Dorsolateral prefrontal cortex (tissue), 120 donors: ENCODE measurements at regions of chr15 and their contacts with region 1.

Region 1: DNA sequence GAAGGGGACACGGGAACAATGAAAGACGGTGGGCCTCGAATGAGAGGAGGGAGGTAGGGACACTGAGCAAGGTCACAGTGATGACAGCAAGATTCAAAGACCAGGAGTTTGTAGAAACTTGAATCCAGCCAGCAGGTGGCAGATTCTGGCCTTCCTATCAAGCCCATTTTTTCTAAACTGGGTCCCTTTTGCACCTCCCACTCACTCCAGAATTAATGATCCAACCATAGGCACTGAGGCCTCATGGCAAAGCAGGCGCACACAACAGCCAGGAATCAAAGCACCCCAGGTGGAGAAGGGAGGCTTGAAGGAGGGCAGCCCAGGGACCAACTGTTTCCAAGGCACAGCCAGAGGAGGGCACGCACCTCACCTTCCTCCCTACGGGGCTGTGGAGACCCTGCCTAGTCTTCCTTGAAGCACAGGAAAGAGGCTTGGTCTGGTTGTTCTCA is 90.2 kb downstream of the ANP32A start:
- DNase-seq: peak in 9 of 10 donors; percentile 28 to 77 (median 58)
- H3K4me3 ChIP-seq: no peak overlapping the region
- H3K27ac ChIP-seq: peak overlapping the region in 53 of 59 donors; percentile 12 to 89 (median 65)
- H3K27me3 ChIP-seq: no peaks in the 10 kb centered on the region
- CTCF ChIP-seq: peak; percentile 64 to 89 (median 78)

Region 2: GRCh38 chr15:68383161-68384074 is 347.1 kb before region 1 on chr15:
- intact Hi-C with region 1: loop called in 1 of 2 experiments (anchors 10 kb)
- DNase-seq: peak in 1 of 10 donors; percentile 5
- H3K4me3 ChIP-seq: no peak overlapping the region
- H3K27ac ChIP-seq: no peak overlapping the region
- H3K27me3 ChIP-seq: peaks cover 0 to 10% (median 0%) of the 10 kb centered on the region in 45 donors
- CTCF ChIP-seq: peak; percentile 42 to 80 (median 63)

Region 3: DNA sequence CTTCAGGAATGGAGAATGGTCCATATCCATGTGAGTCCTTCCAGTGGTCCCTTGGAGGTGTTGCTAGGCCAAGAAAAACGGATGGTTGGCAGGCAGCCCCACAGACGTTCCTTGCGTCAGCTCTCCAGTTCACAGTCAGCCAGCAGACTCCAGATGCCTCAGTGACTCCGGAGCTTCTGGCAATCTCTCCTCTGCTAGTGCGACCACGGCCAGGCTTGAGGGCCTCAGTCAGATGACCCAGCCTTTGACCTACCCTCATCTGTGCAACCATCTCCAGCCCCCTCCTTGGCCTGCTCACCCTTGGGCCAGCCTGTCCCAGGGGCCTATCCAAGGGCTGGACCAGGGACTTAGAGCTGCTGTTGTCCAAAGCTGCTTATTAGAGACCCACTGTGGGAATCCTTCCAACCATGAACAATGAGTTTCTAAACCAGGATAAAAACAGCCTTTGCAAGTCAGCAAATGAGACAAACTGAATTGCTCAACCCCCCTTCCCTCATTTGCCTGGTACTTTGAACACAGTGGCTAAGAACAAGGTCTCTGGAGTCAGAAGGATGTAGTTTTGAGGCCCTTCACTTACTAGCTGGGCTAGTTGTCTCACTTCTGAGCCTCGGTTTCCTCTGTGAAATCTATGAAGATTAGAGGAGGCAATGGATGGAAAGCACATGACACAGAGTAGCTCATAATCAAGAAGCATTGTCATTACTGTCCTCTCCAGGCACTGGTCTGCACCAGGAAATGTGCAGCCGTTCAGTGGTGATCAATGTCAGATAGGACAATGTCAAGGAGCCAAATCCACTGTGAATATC is 45.4 kb after region 1 on chr15:
- intact Hi-C with region 1: loop called in 1 of 2 experiments (anchors 5 kb)
- DNase-seq: peak in 9 of 10 donors; percentile 50 to 82 (median 74)
- H3K4me3 ChIP-seq: peak overlapping the region in 2 of 59 donors; percentile 10 to 16
- H3K27ac ChIP-seq: peak overlapping the region; percentile 35 to 95 (median 89)
- H3K27me3 ChIP-seq: no peaks in the 10 kb centered on the region
- CTCF ChIP-seq: no peak

Region 4: DNA sequence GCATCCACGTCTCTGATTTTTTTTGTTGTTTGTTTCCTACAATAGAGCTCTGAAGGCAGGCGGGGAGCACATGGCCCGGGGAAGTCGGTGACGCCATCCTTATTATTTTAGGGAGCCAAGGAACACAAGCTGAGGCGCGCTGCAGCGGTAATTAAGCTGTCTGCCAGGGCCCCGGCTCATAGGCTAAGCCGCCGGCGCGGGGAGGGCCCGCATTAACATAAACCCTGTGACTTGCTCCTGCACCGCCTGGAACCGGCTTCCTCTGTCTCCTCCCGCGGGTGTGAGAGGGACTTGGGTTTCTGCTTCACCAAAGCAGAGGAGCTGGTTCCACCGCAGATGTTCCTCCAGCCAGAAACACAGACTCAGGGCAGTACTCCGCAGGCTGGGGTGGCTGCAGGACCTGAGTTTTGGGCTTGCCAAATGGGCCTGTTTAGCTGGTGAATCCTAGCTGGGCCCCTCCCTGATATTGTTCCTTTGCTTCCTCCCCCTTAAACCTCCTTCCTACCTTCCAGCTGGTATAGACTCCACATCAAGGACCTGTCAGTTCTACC is 64.9 kb after region 1 on chr15:
- intact Hi-C with region 1: loop called in 1 of 2 experiments (anchors 5 kb)
- DNase-seq: peak; percentile 85 to 96 (median 95)
- H3K4me3 ChIP-seq: peak overlapping the region in 54 of 59 donors; percentile 1 to 59 (median 34)
- H3K27ac ChIP-seq: peak overlapping the region; percentile 63 to 99 (median 96)
- H3K27me3 ChIP-seq: no peaks in the 10 kb centered on the region
- CTCF ChIP-seq: peak in 15 of 56 donors; percentile 3 to 43 (median 15)

Region 5: GRCh38 chr15:68829068-68829467 is 98.6 kb after region 1 on chr15:
- intact Hi-C with region 1: loop called in 1 of 2 experiments (anchors 5 kb)
- DNase-seq: peak in 2 of 10 donors; percentile 64 to 70
- H3K4me3 ChIP-seq: no peak overlapping the region
- H3K27ac ChIP-seq: peak overlapping the region in 32 of 59 donors; percentile 1 to 72 (median 47)
- H3K27me3 ChIP-seq: no peaks in the 10 kb centered on the region
- CTCF ChIP-seq: peak in 55 of 56 donors; percentile 44 to 91 (median 70)